ENCODE measurements at regions of chr12 and their contacts with region 1.

Region 1: GRCh38 chr12:93025145-93025805 is 96.2 kb upstream of the EEA1 start:
- DNase-seq: peak in 1 of 2 experiments; percentile 62
- H3K4me3 ChIP-seq: no peak overlapping the region
- H3K4me3 Mint-ChIP-seq: no peak overlapping the region
- H3K27ac Mint-ChIP-seq: no peak overlapping the region
- H3K4me1 ChIP-seq: peaks cover 51% of the 10 kb centered on the region
- H3K4me1 Mint-ChIP-seq: peaks cover 47% of the 10 kb centered on the region
- H3K27me3 ChIP-seq: no peaks in the 10 kb centered on the region
- H3K27me3 Mint-ChIP-seq: no peaks in the 10 kb centered on the region
- CTCF ChIP-seq: peak in 1 of 2 experiments; percentile 32

Region 2: DNA sequence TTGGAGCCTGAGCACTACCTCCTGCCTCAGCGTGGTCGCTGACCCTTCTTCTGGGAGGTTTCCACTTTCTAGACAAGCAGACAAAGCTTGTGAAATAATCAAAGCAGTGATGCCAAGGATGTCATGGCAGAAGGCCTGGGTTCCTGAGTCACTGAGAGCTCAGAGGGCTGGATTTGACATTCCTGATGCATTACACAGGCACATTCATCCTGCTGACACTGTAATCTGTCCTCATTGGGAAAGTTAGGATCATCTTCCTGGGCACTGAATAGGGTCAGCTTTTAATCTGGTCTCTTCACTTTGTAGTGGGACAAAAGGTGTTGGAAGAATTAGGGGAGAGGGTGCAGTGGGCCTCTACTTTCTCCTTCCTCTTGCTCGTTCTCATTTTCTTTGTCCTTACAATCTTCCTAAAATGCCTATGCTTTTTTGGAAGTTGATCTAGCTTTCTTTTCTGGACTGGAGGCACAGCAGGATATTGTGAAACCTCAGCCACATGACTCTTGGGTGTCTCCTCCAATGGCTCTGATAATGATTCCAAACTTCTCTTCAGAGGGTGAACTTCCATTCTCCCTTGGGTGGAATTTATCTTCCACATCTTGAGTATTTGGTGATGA is 125.8 kb before region 1 on chr12:
- CTCF ChIA-PET with region 1: no interaction called
- POLR2A ChIA-PET with region 1: no interaction called
- intact Hi-C with region 1: no loop called
- DNase-seq: peak in 1 of 2 experiments; percentile 30
- H3K4me3 ChIP-seq: no peak overlapping the region
- H3K4me3 Mint-ChIP-seq: no peak overlapping the region
- H3K27ac Mint-ChIP-seq: no peak overlapping the region
- H3K4me1 ChIP-seq: peaks cover 18% of the 10 kb centered on the region
- H3K4me1 Mint-ChIP-seq: peaks cover 15% of the 10 kb centered on the region
- H3K27me3 ChIP-seq: no peaks in the 10 kb centered on the region
- H3K27me3 Mint-ChIP-seq: no peaks in the 10 kb centered on the region
- CTCF ChIP-seq: no peak

Region 3: DNA sequence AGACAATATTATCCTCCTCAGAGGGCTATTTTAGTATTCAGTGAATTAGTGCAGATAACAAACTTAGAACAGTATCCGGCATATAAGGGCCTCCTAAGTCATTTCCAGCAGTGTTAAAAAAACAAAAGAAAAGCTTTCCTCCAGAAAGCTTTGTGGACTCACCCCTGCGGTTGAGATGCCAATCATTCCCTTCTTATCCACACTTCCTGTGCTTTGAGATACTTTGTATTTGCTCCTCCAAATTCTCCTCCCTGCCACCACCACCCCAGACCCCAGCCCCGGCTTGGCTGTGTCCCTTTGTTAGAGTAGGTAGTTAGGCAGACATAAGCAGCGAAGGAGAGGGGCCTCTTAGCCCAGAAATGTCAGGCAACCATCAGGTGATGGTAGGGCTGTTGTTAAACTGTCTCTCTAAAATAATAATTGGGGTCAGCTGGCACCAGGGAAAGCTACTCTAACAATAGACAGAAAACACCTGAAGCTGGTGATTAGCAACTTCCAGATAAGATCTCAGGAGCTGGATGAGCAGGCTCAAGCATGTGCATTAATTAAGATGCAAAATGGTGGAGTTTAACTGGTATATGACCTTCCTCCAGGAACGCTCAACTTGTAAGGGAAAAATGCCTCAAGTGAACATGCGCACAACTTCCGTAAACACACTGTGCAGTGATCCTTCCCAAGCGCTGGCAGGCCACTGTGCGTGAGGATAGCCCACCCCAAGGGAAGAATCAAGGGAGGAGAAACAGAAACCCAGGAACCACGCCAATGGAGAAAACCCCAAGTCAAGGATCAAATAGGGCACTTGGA is 55.9 kb after region 1 on chr12:
- CTCF ChIA-PET with region 1: no interaction called
- POLR2A ChIA-PET with region 1: interaction called, 18 read pairs
- intact Hi-C with region 1: loop called (anchors 1 kb)
- DNase-seq: peak; percentile 74 to 86
- H3K4me3 ChIP-seq: no peak overlapping the region
- H3K4me3 Mint-ChIP-seq: peak overlapping the region; percentile 50
- H3K27ac Mint-ChIP-seq: peak overlapping the region; percentile 92
- H3K4me1 ChIP-seq: peaks cover 51% of the 10 kb centered on the region
- H3K4me1 Mint-ChIP-seq: peaks cover 36% of the 10 kb centered on the region
- H3K27me3 ChIP-seq: no peaks in the 10 kb centered on the region
- H3K27me3 Mint-ChIP-seq: no peaks in the 10 kb centered on the region
- CTCF ChIP-seq: no peak

Region 4: DNA sequence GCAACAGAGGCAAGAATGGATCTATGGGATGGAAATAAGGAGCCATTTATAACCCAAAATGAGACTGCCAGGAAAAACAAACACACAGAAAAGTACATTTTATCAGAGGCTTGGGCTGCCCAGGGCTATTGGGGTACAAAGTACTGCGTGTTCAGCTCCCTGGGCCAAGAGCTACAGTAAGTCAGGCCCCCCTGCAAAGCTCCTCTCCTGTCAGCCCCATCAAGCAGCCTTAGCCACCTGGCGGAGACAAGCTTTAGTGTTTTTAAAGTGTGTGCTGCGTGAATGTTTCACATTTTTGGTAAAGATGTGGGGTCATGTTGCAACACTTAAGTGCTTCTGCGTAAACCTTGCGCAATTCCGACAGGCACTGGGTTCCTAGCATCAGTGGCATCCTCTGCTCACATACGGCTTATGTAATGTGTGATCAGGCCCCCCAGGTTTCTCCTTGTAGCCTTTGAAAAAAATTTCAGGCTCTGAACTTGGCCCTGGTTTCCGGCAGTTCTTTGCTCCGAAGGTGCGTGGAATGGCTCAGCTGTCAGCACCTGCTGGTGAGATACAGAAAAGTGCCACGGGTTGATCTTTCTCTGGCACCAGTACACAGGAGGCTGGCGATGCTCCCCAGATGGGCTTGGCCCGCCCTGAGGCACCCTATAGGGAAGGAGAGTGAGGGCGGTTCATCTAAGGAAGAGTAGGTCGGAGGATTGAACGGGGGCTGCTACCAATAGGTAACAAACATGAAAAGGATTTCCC is 102.5 kb after region 1 on chr12:
- CTCF ChIA-PET with region 1: interaction called, 5 read pairs
- POLR2A ChIA-PET with region 1: interaction called, 10 read pairs
- intact Hi-C with region 1: loop called (anchors 1 kb)
- DNase-seq: peak; percentile 89 to 93
- H3K4me3 ChIP-seq: no peak overlapping the region
- H3K4me3 Mint-ChIP-seq: peak overlapping the region; percentile 37
- H3K27ac Mint-ChIP-seq: peak overlapping the region; percentile 94
- H3K4me1 ChIP-seq: peaks cover 36% of the 10 kb centered on the region
- H3K4me1 Mint-ChIP-seq: peaks cover 43% of the 10 kb centered on the region
- H3K27me3 ChIP-seq: no peaks in the 10 kb centered on the region
- H3K27me3 Mint-ChIP-seq: no peaks in the 10 kb centered on the region
- CTCF ChIP-seq: peak; percentile 57 to 65

Region 5: DNA sequence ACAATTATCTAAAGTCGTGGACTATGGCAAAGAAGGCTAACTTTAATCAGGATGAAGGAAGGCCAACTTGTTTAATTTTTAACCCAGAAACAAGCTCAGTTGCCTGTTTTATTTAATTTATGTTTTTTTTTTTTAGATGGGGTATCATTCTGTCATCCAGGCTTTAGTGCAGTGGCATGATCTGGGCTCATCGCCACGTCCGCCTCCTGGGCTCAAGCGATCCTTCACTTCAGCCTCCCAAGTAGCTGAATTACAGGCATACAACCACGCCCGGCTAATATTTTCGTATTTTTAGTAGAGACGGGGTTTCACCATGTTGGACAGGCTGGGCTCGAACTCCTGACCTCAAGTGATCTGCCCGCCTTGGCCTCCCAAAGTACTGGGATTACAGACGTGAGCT is 372.1 kb after region 1 on chr12:
- CTCF ChIA-PET with region 1: no interaction called
- POLR2A ChIA-PET with region 1: no interaction called
- intact Hi-C with region 1: loop called (anchors 2 kb)
- DNase-seq: no peak
- H3K4me3 ChIP-seq: no peak overlapping the region
- H3K4me3 Mint-ChIP-seq: no peak overlapping the region
- H3K27ac Mint-ChIP-seq: peak overlapping the region; percentile 35
- H3K4me1 ChIP-seq: peaks cover 13% of the 10 kb centered on the region; the same call in 1 of the 2 replicates
- H3K4me1 Mint-ChIP-seq: no peaks in the 10 kb centered on the region
- H3K27me3 ChIP-seq: no peaks in the 10 kb centered on the region
- H3K27me3 Mint-ChIP-seq: no peaks in the 10 kb centered on the region
- CTCF ChIP-seq: no peak

Measured in Caco-2 (cell line).